GM18951 (cell line): ENCODE measurements at regions of chrX and their contacts with region 1.

Region 1: GRCh38 chrX:65581661-65582339 is 47.2 kb upstream of the LAS1L start:
- POLR2A ChIP-seq: no peak

Region 2: GRCh38 chrX:65508851-65509250 is 72.9 kb before region 1 on chrX:
- in situ Hi-C with region 1: no loop called
- POLR2A ChIP-seq: no peak

Region 3: GRCh38 chrX:66731398-66731797 is 1149.6 kb after region 1 on chrX:
- in situ Hi-C with region 1: loop called (anchors 10 kb)
- POLR2A ChIP-seq: no peak